ENCODE measurements at regions of chr3 and their contacts with region 1.

Region 1: DNA sequence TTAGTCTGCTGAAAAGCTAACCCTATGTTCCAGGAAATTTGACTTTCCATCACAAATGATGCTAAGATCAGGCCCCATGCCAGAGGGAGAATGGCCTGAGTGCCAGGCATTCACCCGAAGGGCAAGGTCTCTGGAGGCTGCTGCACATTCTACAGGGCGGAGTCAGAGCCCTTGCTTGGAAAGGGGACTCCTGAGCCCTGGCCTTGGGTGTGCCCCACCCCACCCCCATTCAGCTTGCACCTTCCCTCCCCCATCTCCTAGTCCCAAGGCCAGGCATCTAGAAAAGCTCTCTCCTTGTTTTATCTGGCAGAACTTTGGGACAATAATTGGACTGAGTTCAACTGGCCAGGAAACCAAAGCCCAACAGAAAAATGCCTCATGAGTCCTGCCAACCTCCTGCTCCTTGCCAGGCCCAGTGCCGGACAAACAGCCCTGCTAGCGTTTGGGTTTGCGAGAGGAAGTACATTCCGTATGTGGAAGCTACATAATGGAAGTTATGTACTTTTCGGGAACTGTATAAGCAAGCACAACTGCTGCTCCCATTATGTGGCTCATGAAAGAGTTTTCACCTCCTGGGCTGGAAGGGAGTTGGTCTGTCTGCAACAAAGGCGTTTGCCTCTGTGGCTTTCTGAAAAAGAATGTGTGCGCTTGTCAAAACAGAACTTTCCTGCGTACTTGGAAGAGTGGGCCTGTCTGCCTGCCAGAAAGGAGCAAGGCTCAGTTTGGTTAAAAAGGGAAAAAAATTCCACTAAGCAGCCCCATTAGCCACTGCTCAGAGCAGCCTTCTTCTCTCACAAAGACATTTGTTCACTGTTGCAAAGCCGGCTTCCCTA is 321.5 kb upstream of the CTNNB1 start:
- DNase-seq: peak; percentile 70
- H3K4me3 ChIP-seq: peak overlapping the region; percentile 24
- H3K27ac ChIP-seq: peak overlapping the region; percentile 89
- H3K4me1 ChIP-seq: peaks cover 38% of the 10 kb centered on the region
- H3K27me3 ChIP-seq: no peaks in the 10 kb centered on the region
- CTCF ChIP-seq: no peak

Region 2: DNA sequence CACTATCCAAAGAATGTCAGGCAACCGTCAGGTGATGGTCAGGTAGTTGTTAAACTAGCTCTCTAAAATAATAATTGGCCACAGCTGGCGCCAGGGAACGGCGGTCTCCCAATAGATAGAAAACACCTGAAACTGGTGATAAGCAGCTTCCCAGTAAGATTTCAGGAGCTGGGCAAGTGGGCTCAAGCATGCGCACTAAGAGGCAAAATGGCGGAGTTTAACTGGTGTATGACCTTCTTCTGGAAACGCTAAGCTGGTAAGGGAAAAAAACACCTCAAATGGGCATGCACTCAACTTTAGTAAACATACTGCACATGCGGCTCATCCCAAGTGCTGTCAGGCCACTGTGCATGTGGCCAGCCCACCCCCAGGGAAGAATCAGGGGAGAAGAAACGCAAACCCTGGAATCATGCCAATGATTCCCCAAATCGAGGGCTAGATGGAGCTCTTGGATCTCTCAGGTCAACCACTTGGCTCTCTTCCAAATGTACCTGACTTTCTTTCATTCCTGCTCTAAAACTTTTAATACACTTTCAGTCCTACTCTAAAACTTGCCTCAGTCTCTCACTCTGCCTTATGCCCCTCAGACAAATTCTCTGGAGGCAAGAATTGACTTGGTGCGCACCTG is 158.1 kb before region 1 on chr3:
- intact Hi-C with region 1: loop called (anchors 5 kb)
- DNase-seq: no peak
- H3K4me3 ChIP-seq: no peak overlapping the region
- H3K27ac ChIP-seq: no peak overlapping the region
- H3K4me1 ChIP-seq: no peaks in the 10 kb centered on the region
- H3K27me3 ChIP-seq: no peaks in the 10 kb centered on the region
- CTCF ChIP-seq: peak; percentile 61

Region 3: DNA sequence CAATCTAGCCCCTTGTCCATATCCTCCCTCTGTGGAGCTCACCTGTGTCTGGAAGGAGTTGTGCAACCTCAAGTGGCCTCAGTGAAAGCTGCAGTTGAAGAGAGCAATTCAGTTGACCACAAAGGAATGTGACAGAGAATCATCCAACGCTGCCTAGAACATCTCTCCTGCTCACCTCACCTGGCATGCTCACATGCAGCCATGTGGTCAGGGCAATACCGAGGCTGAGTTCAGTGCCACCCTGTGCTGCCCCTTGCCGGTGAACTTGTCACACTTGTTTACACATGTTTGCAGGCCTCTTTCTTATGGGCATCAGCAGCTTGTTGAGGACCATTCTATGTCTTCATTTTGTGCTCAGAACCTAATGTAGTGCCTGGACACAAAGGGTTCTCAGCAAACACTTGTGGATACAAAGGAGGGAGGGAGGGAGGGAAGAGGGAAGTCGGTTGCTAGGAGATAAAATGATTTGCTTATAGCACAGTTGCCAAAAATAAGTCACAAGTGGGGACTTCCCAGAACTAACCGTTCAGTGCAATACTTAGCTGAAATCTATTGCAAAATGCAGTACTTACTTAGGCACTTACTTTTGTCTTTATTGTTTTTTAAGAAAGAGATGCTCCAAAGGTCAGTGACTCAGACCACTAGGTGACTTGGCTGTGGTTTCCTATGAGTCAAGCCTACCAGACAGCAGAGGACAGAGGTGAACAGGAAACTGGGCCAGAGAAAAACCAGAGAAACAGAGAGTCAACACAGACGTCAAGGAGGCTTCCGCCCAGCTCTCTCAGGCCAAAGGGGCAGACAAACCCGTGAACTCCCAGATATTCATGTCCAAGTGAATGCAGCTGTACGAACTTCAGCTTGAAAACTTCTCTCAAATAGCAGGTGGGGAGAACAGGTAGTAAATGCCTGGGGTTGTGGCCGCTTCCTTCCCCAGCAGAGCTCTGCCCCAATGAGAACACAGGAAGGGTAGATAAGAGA is 93.6 kb after region 1 on chr3:
- intact Hi-C with region 1: loop called (anchors 10 kb)
- DNase-seq: peak; percentile 49
- H3K4me3 ChIP-seq: no peak overlapping the region
- H3K27ac ChIP-seq: peak overlapping the region; percentile 81
- H3K4me1 ChIP-seq: peaks cover 64% of the 10 kb centered on the region
- H3K27me3 ChIP-seq: no peaks in the 10 kb centered on the region
- CTCF ChIP-seq: peak; percentile 10

Region 4: DNA sequence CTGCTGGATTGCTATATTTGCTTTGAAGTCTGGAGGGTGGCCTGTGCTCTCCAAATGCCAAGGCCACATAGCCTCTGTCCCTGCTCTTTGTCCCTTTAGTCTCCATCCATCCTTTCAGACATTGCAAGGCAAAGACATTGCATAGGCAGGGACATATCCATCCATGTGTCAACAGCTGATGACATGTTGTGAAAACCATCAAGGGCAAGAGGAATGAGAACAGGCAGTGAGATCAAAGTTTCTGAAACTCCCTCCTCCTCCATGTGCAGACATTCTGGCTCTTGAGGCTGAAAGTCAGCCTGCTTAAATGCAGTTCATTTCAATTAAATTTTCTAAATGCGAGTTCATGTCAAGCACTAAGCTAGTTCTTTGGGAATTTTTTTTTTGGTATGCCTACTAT is 186.2 kb after region 1 on chr3:
- intact Hi-C with region 1: no loop called
- DNase-seq: no peak
- H3K4me3 ChIP-seq: no peak overlapping the region
- H3K27ac ChIP-seq: no peak overlapping the region
- H3K4me1 ChIP-seq: no peaks in the 10 kb centered on the region
- H3K27me3 ChIP-seq: no peaks in the 10 kb centered on the region
- CTCF ChIP-seq: no peak

Region 5: GRCh38 chr3:41199866-41200668 is 322.2 kb after region 1 on chr3:
- intact Hi-C with region 1: loop called (anchors 5 kb)
- DNase-seq: peak; percentile 37
- H3K4me3 ChIP-seq: peak overlapping the region; percentile 84
- H3K27ac ChIP-seq: peak overlapping the region; percentile 95
- H3K4me1 ChIP-seq: peaks cover 66% of the 10 kb centered on the region
- H3K27me3 ChIP-seq: no peaks in the 10 kb centered on the region
- CTCF ChIP-seq: no peak

Region 6: DNA sequence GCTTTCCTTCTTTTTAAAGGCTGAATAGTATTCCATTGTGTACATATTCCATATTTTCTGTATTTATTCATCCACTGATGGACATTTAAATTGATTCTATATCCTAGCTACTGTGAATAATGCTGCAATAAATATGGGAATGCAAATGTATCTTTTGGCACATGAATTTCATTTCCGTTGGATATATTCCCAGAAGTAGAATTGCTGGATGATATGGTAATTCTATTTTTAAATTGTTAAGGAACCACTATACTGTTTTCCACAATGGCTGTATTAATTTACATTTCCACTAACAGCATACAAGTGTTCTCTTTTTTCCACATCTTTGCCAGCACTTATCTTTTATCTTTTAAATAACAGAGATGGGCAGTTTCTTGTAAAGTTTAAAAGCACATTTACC is 624.2 kb after region 1 on chr3:
- intact Hi-C with region 1: no loop called
- DNase-seq: no peak
- H3K4me3 ChIP-seq: no peak overlapping the region
- H3K27ac ChIP-seq: no peak overlapping the region
- H3K4me1 ChIP-seq: no peaks in the 10 kb centered on the region
- H3K27me3 ChIP-seq: no peaks in the 10 kb centered on the region
- CTCF ChIP-seq: no peak